Cardiac septum (tissue), 1 donor: ENCODE measurements at regions of chr15 and their contacts with region 1.

Region 1: GRCh38 chr15:100721770-100722550 is 119.6 kb downstream of the ASB7 start:
- DNase-seq: no peak

Region 2: DNA sequence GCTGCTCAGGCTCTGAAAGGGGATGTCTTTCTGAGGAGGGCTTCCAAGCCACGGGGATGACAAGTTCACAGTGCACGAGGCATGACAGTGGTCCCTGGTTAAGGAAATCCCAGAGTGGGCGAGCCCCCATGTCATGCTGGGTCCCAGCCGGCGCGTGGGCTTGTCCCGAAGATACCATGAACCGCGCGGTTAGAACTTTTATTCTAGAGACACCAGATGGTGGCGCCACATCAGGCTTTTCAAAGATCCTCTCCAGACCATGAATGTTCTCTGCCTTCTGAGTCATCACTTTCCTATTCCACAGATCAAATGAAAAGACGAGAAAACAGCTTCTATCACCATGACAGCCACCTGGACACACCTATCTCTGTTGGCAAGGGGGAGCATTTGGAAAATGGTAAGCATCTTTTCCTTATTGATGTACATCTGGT is 760.9 kb before region 1 on chr15:
- intact Hi-C with region 1: no loop called
- DNase-seq: no peak

Region 3: GRCh38 chr15:100663086-100663914 is 58.7 kb before region 1 on chr15:
- intact Hi-C with region 1: loop called (anchors 10 kb)
- DNase-seq: no peak

Region 4: DNA sequence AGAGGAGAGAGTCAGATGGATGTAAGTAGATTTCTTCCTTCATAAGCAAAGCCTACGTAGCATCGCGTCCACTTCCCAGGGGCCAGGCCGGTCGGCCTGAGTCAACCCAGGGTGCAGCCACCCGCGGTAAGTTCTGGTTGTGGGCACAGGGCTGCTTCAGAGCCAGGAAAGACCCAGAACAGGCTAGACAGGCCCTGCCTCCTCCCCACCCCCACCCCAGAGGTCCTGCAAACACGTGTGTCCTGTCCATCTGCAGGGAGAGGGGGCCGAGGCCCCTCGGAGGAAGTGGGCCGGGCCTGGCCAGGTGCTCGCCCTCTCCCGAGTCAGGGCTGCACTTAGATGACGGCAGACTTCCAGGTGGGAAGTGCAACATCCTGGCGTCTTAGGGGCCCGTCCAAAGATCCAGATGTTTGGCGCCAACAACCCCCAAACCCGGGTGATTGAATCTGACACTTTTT is 56.9 kb after region 1 on chr15:
- intact Hi-C with region 1: loop called (anchors 5 kb)
- DNase-seq: peak; percentile 51

Region 5: DNA sequence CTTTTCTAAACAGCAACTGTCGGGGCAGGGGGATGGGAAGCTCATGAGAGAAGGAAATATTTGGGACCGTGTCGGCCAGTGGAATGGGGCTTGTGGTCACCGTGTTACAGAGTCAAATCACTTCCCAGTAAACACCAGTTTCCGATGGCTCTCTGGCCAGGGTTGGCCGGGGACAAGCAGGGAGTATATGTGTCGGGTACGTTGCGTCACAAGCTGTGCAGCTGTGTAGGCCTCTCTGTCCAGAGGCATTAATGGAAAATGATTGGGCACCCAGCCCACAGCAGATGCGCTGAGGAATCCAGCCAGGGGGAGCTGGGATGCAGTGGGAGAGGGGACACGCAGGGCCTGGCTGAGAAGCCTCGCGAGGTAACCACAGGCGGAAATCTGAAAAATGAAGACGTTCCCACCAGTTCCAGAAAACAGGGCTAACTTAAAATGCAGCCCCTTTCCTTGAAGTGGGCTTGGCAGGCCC is 141.9 kb after region 1 on chr15:
- intact Hi-C with region 1: loop called (anchors 5 kb)
- DNase-seq: peak; percentile 77